Natural killer cell (primary cell): ENCODE measurements at regions of chr10 and their contacts with region 1.

Region 1: DNA sequence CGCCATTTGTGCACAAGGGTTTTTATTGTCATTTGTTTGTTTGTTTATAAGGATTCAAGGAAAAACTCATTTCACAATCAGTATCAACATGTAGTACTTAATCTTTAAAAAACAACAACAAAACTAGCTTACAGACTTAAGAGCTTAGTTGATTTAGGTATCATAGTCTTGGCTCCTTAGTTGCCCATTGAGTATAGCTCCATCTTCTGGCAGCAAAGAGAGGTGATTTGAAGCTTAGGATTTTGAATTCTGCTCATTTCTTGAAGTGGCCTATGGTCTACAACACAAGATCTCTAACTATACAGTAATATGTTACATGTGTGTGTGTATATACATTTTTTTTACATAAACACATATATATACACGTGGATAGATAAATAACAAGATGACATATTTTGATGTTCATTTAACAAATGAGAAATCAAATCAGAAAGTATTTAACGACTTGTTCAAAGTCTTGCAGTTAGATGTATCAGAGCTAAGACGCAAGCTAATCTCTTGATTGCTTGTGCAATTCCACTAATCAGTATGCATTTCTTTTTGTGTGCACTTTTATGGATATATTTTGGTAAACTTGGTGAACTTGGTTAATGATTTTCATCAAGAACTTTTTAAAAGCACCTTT is 307.3 kb downstream of the CAMK1D start:
- DNase-seq: peak in 1 of 2 donors; percentile 73
- ATAC-seq: peak; percentile 75 to 84 (median 75)
- H3K4me3 ChIP-seq: no peak overlapping the region
- H3K4me3 Mint-ChIP-seq: no peak overlapping the region
- H3K27ac ChIP-seq: no peak overlapping the region
- H3K27ac Mint-ChIP-seq: peak overlapping the region in 1 of 2 donors; percentile 23
- H3K4me1 ChIP-seq: peaks cover 6% of the 10 kb centered on the region
- H3K4me1 Mint-ChIP-seq: peaks cover 12 to 14% of the 10 kb centered on the region in 2 donors
- H3K27me3 ChIP-seq: no peaks in the 10 kb centered on the region
- H3K27me3 Mint-ChIP-seq: no peaks in the 10 kb centered on the region
- CTCF ChIP-seq: peak; percentile 78

Region 2: GRCh38 chr10:12129222-12130111 is 527.2 kb before region 1 on chr10 and contains the start of gene SEC61A2:
- intact Hi-C with region 1: loop called (anchors 5 kb)
- DNase-seq: peak; percentile 98 to 99
- ATAC-seq: peak; percentile 93 to 98 (median 95)
- H3K4me3 ChIP-seq: peak within 1 kb of the TSS; percentile 81
- H3K4me3 Mint-ChIP-seq: peak within 1 kb of the TSS; percentile 92
- H3K27ac ChIP-seq: peak within 1 kb of the TSS; percentile 86
- H3K27ac Mint-ChIP-seq: peak within 1 kb of the TSS; percentile 69 to 74
- H3K4me1 ChIP-seq: peaks cover 17% of the 10 kb centered on the region
- H3K4me1 Mint-ChIP-seq: peaks cover 13 to 14% of the 10 kb centered on the region in 2 donors
- H3K27me3 ChIP-seq: no peaks in the 10 kb centered on the region
- H3K27me3 Mint-ChIP-seq: no peaks in the 10 kb centered on the region
- CTCF ChIP-seq: no peak
- total RNA-seq, gene SEC61A2: 16.6 to 22.2 (median 17.4) TPM

Region 3: DNA sequence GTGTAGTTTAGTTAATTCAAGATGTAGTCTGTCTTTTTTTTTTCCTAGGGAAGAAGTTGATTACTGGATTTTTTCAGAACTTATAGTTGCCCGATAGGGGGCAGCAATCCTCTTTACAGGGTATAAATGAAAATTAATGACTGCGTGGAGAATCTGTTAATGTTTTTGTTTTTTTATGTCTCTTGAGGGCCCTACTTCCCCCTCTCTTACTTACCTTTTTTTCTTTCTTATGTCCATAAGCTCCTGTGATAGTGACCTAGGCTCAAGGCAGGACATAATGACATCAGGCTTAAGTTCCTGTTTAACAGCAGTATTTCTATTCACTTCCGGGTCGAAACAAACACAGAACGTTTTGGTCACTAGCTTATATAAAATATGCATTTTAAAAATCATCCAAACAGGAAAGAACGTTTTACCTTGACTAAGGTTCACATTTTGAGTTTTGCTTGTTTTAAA is 441.8 kb before region 1 on chr10:
- intact Hi-C with region 1: loop called (anchors 1 kb)
- DNase-seq: peak in 1 of 2 donors; percentile 79
- ATAC-seq: peak; percentile 60 to 79 (median 68)
- H3K4me3 ChIP-seq: peak overlapping the region; percentile 29
- H3K4me3 Mint-ChIP-seq: peak overlapping the region; percentile 79
- H3K27ac ChIP-seq: peak overlapping the region; percentile 43
- H3K27ac Mint-ChIP-seq: peak overlapping the region; percentile 85 to 88
- H3K4me1 ChIP-seq: no peaks in the 10 kb centered on the region
- H3K4me1 Mint-ChIP-seq: peaks cover 16 to 18% of the 10 kb centered on the region in 2 donors
- H3K27me3 ChIP-seq: no peaks in the 10 kb centered on the region
- H3K27me3 Mint-ChIP-seq: no peaks in the 10 kb centered on the region
- CTCF ChIP-seq: peak; percentile 88

Region 4: DNA sequence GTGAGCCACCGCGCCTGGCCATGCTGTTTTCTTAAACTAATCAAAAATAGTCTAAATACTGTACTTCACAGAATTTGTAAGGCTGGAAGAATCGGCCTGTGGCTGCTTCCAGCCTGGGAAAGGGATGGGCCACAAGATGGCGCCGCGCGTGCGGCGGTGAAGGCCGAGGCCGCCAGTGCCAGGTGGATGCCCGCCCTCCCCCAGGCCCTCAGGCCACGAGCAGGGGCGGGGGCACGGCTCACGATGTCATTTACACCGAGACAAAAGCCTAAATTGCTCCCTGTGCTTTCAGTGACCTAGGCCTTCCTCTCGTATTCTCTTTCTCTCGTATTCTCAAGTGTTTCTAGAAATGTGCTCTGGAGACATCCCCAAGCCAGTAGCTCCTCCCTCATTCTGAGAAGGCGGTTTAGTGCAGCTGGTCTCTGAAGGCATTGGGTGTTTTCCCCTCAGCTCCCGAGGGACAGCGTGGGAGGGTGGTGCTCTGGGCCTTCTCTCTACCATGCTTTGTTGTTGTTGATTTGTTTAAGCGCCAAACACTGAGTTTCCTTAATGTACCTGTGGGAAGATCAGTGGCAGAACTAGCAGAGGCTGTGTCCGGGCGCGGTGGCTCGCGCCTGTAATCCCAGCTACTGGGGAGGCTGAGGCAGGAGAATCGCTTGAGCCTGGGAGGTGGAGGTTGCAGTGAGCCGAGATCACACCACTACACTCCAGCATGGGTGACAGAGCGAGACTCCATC is 392.3 kb before region 1 on chr10:
- intact Hi-C with region 1: loop called (anchors 1 kb)
- DNase-seq: peak; percentile 51 to 82
- ATAC-seq: peak; percentile 41 to 69 (median 51)
- H3K4me3 ChIP-seq: no peak overlapping the region
- H3K4me3 Mint-ChIP-seq: peak overlapping the region; percentile 55
- H3K27ac ChIP-seq: peak overlapping the region; percentile 91
- H3K27ac Mint-ChIP-seq: peak overlapping the region in 1 of 2 donors; percentile 60
- H3K4me1 ChIP-seq: peaks cover 46% of the 10 kb centered on the region
- H3K4me1 Mint-ChIP-seq: peaks cover 25 to 30% of the 10 kb centered on the region in 2 donors
- H3K27me3 ChIP-seq: peaks cover 5% of the 10 kb centered on the region
- H3K27me3 Mint-ChIP-seq: peaks cover 18 to 25% of the 10 kb centered on the region in 2 donors
- CTCF ChIP-seq: peak; percentile 57

Region 5: DNA sequence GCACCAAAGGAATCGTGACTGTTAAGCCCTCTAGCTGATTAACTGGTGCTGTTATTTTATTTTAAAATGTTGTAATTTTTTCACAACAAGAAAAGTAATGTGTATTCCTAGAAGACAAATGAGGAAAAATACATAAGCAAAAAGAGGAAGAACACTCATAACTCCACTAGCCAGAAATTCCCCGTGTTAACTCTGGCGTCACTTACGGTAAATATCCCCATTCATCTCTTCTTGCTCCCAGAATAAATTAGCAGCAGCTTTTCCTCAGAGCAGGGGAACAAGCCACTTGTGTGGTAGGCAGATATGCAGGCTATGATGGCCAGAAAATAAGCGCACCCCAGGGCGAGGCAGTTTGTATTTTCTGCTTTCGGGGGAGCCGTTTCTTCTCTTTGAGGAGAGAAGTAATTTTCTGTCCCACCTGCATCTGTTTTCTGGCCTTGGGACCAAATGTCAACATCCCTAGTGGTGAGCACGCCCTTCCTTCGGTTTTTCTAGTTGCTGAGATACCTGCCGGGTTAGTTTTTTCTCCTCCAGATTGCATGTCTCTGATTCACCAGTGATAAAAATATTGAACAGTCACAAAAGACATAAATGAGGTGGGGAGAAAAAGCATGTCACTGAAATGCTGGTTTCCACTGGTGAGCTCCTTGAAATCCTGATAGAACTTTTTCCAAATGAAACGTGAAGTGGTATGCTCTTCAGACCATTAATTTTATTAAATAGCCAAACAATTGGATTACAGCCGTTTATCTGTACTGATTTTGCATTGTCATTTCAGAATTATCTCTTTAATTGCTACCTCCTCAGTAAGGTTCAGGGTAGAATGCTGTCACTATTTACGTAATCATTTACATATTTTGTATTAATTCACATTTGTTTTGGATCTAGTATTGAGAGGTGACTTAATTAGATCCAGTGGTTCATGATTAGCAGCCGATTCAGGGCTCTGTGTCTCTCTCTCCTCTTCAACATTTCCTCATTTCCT is 39.1 kb before region 1 on chr10:
- intact Hi-C with region 1: no loop called
- DNase-seq: no peak
- ATAC-seq: no peak
- H3K4me3 ChIP-seq: no peak overlapping the region
- H3K4me3 Mint-ChIP-seq: no peak overlapping the region
- H3K27ac ChIP-seq: no peak overlapping the region
- H3K27ac Mint-ChIP-seq: no peak overlapping the region
- H3K4me1 ChIP-seq: no peaks in the 10 kb centered on the region
- H3K4me1 Mint-ChIP-seq: peaks cover 13 to 16% of the 10 kb centered on the region in 2 donors
- H3K27me3 ChIP-seq: no peaks in the 10 kb centered on the region
- H3K27me3 Mint-ChIP-seq: no peaks in the 10 kb centered on the region
- CTCF ChIP-seq: no peak

Region 6: GRCh38 chr10:13743101-13743693 is 1086.6 kb after region 1 on chr10:
- intact Hi-C with region 1: no loop called
- DNase-seq: no peak
- ATAC-seq: peak in 2 of 3 donors; percentile 35 to 77
- H3K4me3 ChIP-seq: no peak overlapping the region
- H3K4me3 Mint-ChIP-seq: peak overlapping the region; percentile 35
- H3K27ac ChIP-seq: no peak overlapping the region
- H3K27ac Mint-ChIP-seq: no peak overlapping the region
- H3K4me1 ChIP-seq: peaks cover 8% of the 10 kb centered on the region
- H3K4me1 Mint-ChIP-seq: peaks cover 12 to 14% of the 10 kb centered on the region in 2 donors
- H3K27me3 ChIP-seq: no peaks in the 10 kb centered on the region
- H3K27me3 Mint-ChIP-seq: peaks cover 15 to 30% of the 10 kb centered on the region in 2 donors
- CTCF ChIP-seq: no peak